ENCODE measurements at regions of chr14 and their contacts with region 1.

Region 1: DNA sequence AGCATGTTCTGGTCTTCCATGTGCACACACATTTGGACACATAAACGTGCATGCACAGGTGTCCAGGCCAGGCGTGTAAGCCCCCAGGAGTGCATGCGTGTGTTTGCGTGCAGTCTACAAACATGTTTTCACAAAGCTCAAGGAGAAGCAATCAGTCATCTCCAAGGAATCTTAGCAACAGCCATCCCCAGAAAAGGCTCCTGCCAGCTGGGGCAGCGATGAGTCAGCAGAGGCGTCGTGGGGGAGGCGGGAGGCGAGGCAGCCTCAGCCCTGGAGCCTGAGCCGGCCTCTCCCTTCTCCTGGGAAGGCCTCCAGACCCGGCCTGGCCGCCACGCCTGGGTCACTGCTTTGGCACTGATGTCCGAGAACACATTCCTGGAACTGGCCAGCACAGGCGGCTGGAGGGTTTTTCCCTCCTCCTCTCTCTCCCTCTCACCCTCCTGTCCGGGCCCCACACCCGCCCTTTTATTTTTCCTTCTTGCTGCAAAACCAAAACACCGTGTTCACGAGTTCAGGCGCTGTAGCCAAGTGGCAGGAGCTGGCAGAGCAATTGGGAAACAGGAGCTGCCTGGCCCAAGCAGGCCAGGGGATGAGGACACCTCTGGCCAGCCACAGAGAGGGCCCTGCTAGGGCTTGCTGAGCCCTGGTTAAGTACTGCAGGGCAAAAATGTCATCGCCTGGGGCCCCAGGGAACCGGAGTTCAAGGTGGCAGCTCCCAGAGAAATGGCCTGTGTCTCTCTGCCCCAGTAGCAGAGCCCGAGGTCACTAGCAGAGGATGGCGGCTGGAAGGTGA is 92.7 kb downstream of the LRRC74A start:
- DNase-seq: no peak
- ATAC-seq: no peak
- H3K4me3 ChIP-seq: no peak overlapping the region
- H3K4me3 Mint-ChIP-seq: peak overlapping the region; percentile 70
- H3K27ac ChIP-seq: no peak overlapping the region
- H3K27ac Mint-ChIP-seq: peak overlapping the region in 1 of 2 donors; percentile 83
- H3K4me1 ChIP-seq: peaks cover 25% of the 10 kb centered on the region
- H3K4me1 Mint-ChIP-seq: peaks cover 0 to 30% of the 10 kb centered on the region in 2 donors
- H3K27me3 ChIP-seq: no peaks in the 10 kb centered on the region
- H3K27me3 Mint-ChIP-seq: no peaks in the 10 kb centered on the region
- CTCF ChIP-seq: no peak

Region 2: DNA sequence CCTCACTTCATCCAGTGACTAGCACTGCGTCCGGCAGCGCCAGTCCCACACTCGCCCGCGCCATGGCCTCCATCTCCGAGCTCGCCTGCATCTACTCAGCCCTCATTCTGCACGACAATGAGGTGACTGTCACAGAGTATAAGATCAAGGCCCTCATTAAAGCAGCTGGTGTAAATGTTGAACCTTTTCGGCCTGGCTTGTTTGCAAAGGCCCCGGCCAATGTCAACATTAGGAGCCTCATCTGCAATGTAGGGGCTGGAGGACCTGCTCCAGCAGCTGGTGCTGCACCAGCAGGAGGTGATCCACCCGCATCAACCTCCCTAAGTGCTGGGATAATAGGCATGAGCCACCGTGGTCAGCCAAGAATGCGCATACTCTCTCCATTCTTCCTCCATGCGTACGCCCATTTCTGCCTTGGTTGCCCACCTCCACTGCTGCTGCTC is 49.7 kb after region 1 on chr14:
- intact Hi-C with region 1: loop called (anchors 10 kb)
- DNase-seq: no peak
- ATAC-seq: no peak
- H3K4me3 ChIP-seq: no peak overlapping the region
- H3K4me3 Mint-ChIP-seq: no peak overlapping the region
- H3K27ac ChIP-seq: no peak overlapping the region
- H3K27ac Mint-ChIP-seq: no peak overlapping the region
- H3K4me1 ChIP-seq: peaks cover 28% of the 10 kb centered on the region
- H3K4me1 Mint-ChIP-seq: peaks cover 34 to 39% of the 10 kb centered on the region in 2 donors
- H3K27me3 ChIP-seq: no peaks in the 10 kb centered on the region
- H3K27me3 Mint-ChIP-seq: peaks cover 7 to 22% of the 10 kb centered on the region in 2 donors
- CTCF ChIP-seq: no peak

Measured in natural killer cell (primary cell).